AG04449 (cell line): ENCODE measurements at regions of chr20 and their contacts with region 1.

Region 1: GRCh38 chr20:31723319-31724078 is 831 bp upstream of the BCL2L1 start:
- DNase-seq: peak; percentile 91
- H3K4me3 ChIP-seq: peak overlapping the region; percentile 76
- CTCF ChIP-seq: peak; percentile 88

Region 2: GRCh38 chr20:31605031-31605901 is 118.2 kb before region 1 on chr20 and contains the start of gene ID1:
- CTCF ChIA-PET with region 1: interaction called, 94 read pairs
- POLR2A ChIA-PET with region 1: interaction called, 3 read pairs
- DNase-seq: no peak
- H3K4me3 ChIP-seq: peak within 1 kb of the TSS; percentile 88
- CTCF ChIP-seq: no peak

Region 3: DNA sequence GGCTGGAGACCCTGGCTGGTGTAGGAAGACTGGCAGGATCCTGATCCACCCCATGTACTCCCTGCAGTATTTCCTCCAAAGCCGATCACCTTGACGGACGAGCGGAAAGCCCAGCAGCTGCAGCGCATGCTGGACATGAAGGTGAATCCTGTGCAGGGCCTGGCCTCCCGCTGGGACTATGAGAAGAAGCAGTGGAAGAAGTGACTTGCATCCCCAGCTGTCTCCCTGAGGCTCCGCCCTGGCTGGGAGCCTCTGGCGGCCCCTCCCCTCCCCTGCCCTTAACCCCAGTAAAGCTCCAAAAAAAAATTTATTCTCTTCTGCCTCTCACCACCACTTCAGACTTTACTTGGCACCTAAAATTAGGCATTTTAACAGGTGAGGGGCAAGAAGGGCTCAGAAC is 78.8 kb before region 1 on chr20:
- CTCF ChIA-PET with region 1: interaction called, 42 read pairs
- POLR2A ChIA-PET with region 1: no interaction called
- DNase-seq: no peak
- H3K4me3 ChIP-seq: no peak overlapping the region
- CTCF ChIP-seq: no peak

Region 4: DNA sequence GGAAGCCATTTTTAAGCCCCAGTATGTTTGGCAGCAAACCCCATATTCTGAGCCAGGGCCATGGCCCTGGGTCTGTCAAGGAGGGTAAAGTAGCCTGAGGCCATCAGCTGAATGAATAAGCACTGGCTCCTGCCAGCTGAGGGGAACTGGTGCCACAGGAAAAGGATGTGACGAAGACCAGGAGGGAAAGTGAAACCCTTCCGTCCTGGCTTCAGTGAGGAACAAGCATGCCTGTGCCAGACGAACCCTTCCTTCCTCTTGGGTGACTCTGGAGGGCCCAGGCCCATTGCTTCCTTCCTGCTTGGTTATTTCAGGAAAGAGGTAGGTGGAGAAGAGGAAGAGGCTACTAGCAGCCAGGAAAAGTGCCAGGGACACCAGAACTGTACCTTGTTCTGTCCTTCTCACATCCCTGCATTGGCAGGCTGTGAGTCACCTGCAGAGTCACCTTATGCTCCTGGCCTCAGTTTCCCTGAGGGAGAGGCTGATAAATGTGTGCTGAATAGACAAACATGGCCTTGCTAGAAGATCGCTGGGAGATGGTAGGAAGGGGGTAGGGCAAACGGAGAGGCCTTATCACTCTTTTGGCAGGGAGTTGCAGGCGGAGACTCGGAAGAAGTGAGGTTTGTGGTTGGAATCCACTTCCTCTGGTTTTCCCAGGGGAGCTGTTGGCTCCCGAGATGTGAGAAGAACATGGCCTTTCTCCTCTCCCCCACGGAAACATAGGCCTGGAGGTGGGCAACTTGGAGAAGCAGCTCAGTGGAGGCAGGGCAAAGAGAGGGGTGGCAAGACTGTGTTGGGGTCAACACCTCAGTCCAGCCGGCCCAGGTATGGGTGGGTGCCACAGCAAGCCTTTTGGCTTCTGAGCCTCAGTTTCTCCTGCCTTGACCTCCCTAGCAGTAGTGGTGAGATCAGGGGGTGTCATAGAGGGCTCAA is 48.3 kb before region 1 on chr20:
- CTCF ChIA-PET with region 1: interaction called, 59 read pairs
- POLR2A ChIA-PET with region 1: interaction called, 4 read pairs
- DNase-seq: peak; percentile 34
- H3K4me3 ChIP-seq: no peak overlapping the region
- CTCF ChIP-seq: no peak

Region 5: DNA sequence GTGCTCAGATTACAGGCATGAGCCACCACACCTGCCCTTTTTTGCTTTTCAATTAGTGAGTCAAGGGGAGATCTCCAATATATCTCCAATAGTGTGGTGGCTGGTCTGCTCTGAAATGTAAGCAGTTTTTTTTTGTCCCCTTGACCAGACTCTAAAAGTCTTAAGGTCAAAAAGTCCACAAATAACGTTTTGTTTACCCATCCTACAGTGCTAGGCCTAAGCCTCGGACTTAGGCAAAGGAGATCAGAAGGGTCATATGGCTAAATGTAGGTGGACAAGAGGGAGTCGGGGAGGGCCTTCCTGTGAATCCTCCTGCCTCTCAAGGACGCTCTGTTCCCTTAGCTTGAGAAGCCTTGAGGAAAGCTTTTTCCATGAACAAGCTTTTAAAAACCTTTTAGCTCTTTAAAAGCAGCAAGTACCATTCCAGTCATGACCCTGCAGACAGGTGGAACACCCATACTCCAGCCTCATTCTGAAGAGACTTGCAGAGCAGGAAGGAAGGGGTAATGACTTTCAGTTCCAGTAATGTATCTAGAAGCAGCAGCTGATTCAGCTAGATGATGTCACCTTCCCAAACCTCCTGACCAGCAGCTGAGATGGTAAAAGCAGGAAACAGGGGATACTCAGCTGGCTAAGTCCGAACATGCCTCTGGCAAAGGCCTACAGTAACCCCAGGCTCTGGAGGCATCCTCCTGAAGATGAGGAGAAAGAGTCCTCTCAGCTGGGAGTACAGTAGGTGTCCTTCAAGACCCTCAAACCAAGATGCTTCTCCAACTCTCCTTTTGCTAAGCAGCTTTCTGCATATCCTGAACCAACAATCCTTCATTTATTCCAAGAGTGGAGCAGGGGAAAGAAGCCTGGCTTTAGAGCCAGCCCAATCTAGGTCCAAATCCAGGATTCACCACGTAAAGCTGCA is 24.4 kb before region 1 on chr20:
- CTCF ChIA-PET with region 1: interaction called, 79 read pairs
- POLR2A ChIA-PET with region 1: interaction called, 6 read pairs
- DNase-seq: peak; percentile 87
- H3K4me3 ChIP-seq: no peak overlapping the region
- CTCF ChIP-seq: no peak

Region 6: DNA sequence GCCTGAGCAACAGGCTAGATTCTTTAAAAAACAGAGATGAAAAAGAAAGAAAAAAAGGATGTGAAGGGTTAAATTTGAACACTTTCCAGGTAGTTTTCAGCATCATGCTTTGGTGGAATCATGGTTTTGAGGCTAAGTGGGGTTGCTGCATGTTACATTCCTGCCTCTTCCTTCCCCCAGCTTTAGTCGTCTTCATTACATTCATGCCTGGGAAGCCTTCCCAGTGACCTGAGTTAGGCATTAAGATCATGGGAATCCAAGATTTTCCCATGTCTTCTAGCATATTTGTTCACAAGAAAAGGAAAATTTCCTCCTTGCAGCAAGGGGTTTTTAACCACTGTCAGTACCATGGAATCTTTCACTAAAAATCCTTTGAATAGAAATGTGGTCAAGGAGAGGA is 27.6 kb after region 1 on chr20:
- CTCF ChIA-PET with region 1: interaction called, 49 read pairs
- POLR2A ChIA-PET with region 1: no interaction called
- DNase-seq: peak; percentile 94
- H3K4me3 ChIP-seq: no peak overlapping the region
- CTCF ChIP-seq: no peak

Region 7: GRCh38 chr20:31990641-31991338 is 267.3 kb after region 1 on chr20:
- CTCF ChIA-PET with region 1: no interaction called
- POLR2A ChIA-PET with region 1: no interaction called
- DNase-seq: no peak
- H3K4me3 ChIP-seq: no peak overlapping the region
- CTCF ChIP-seq: no peak